ENCODE measurements at regions of chr12 and their contacts with region 1.

Region 1: GRCh38 chr12:99386907-99387306 is 260.6 kb upstream of the GARIN6 start:
- DNase-seq: no peak
- ATAC-seq: peak; percentile 45
- H3K4me3 ChIP-seq: no peak overlapping the region
- H3K27ac ChIP-seq: no peak overlapping the region
- H3K4me1 ChIP-seq: no peaks in the 10 kb centered on the region
- H3K27me3 ChIP-seq: no peaks in the 10 kb centered on the region
- CTCF ChIP-seq: peak; percentile 42 to 56 (median 51); a peak in 5 of 6 replicates
- EP300 ChIP-seq: no peak
- POLR2A ChIP-seq: no peak
- RAD21 ChIP-seq: peak; percentile 75

Region 2: GRCh38 chr12:99212275-99212674 is 174.6 kb before region 1 on chr12:
- CTCF ChIA-PET with region 1: no interaction called
- POLR2A ChIA-PET with region 1: no interaction called
- RAD21 ChIA-PET with region 1: no interaction called
- SMC1A ChIA-PET with region 1: no interaction called
- in situ Hi-C with region 1: no loop called
- intact Hi-C with region 1: no loop called
- DNase-seq: no peak
- ATAC-seq: no peak
- H3K4me3 ChIP-seq: no peak overlapping the region
- H3K27ac ChIP-seq: no peak overlapping the region
- H3K4me1 ChIP-seq: no peaks in the 10 kb centered on the region
- H3K27me3 ChIP-seq: no peaks in the 10 kb centered on the region
- CTCF ChIP-seq: no peak
- EP300 ChIP-seq: no peak
- POLR2A ChIP-seq: no peak
- RAD21 ChIP-seq: no peak

Region 3: DNA sequence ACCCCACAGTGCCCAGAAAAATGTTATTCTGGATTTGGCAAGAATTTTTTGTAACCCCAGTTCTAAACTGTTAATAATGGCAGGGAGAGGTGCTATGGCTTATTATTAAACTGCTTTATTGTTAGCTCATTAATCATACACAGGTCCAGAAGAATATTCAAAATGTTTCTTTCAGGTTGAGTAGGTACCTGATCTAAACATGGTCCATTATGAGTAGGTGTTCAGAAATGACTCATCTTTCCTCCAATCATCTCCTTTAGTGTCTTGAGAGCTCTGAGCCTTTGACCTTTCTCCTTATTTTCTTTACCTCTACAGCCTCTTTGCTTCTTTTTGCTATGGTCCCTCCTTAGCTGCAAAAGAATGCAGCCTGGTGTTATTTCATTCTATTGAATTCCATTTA is 49.7 kb after region 1 on chr12:
- CTCF ChIA-PET with region 1: interaction called, 4 read pairs
- POLR2A ChIA-PET with region 1: no interaction called
- RAD21 ChIA-PET with region 1: interaction called, 5 read pairs
- SMC1A ChIA-PET with region 1: interaction called, 5 read pairs
- in situ Hi-C with region 1: no loop called
- intact Hi-C with region 1: loop called (anchors 5 kb)
- DNase-seq: peak; percentile 73
- ATAC-seq: peak; percentile 94
- H3K4me3 ChIP-seq: no peak overlapping the region
- H3K27ac ChIP-seq: no peak overlapping the region; the same call in 1 of the 2 replicates
- H3K4me1 ChIP-seq: no peaks in the 10 kb centered on the region
- H3K27me3 ChIP-seq: no peaks in the 10 kb centered on the region
- CTCF ChIP-seq: no peak
- EP300 ChIP-seq: peak; percentile 92 to 99
- POLR2A ChIP-seq: no peak
- RAD21 ChIP-seq: no peak

Region 4: GRCh38 chr12:99453836-99454538 is 67.1 kb after region 1 on chr12:
- CTCF ChIA-PET with region 1: no interaction called
- POLR2A ChIA-PET with region 1: no interaction called
- RAD21 ChIA-PET with region 1: no interaction called
- SMC1A ChIA-PET with region 1: interaction called, 4 read pairs
- in situ Hi-C with region 1: no loop called
- intact Hi-C with region 1: loop called (anchors 5 kb)
- DNase-seq: no peak
- ATAC-seq: peak; percentile 70
- H3K4me3 ChIP-seq: no peak overlapping the region
- H3K27ac ChIP-seq: no peak overlapping the region; the same call in 1 of the 2 replicates
- H3K4me1 ChIP-seq: peaks cover 3% of the 10 kb centered on the region
- H3K27me3 ChIP-seq: no peaks in the 10 kb centered on the region
- CTCF ChIP-seq: no peak
- EP300 ChIP-seq: no peak
- POLR2A ChIP-seq: no peak
- RAD21 ChIP-seq: no peak

Region 5: DNA sequence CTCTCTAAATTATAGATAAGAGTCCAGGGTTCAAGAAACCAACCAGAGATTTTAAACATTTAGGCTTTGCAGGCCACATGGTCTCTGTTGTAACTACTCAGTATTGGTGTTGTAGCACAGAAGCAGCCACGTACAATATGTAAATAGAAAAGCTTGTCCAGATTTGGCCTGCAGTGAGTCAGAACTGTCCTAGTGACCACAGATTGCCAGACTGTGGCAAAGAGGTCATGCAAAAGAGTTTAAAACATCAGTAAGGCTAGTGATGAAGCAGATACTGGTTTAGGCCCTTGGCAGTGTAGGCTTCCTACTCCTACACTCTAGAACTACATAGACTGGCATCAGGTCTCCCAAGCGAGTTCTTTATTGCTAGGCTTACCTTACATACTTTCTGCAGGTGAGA is 143.1 kb after region 1 on chr12:
- CTCF ChIA-PET with region 1: no interaction called
- POLR2A ChIA-PET with region 1: no interaction called
- RAD21 ChIA-PET with region 1: no interaction called
- SMC1A ChIA-PET with region 1: interaction called, 5 read pairs
- in situ Hi-C with region 1: no loop called
- intact Hi-C with region 1: loop called (anchors 5 kb)
- DNase-seq: peak; percentile 62
- ATAC-seq: peak; percentile 96
- H3K4me3 ChIP-seq: no peak overlapping the region
- H3K27ac ChIP-seq: no peak overlapping the region
- H3K4me1 ChIP-seq: no peaks in the 10 kb centered on the region
- H3K27me3 ChIP-seq: no peaks in the 10 kb centered on the region
- CTCF ChIP-seq: no peak
- EP300 ChIP-seq: peak; percentile 27 to 28; a peak in 1 of 4 replicates
- POLR2A ChIP-seq: no peak
- RAD21 ChIP-seq: no peak

Region 6: DNA sequence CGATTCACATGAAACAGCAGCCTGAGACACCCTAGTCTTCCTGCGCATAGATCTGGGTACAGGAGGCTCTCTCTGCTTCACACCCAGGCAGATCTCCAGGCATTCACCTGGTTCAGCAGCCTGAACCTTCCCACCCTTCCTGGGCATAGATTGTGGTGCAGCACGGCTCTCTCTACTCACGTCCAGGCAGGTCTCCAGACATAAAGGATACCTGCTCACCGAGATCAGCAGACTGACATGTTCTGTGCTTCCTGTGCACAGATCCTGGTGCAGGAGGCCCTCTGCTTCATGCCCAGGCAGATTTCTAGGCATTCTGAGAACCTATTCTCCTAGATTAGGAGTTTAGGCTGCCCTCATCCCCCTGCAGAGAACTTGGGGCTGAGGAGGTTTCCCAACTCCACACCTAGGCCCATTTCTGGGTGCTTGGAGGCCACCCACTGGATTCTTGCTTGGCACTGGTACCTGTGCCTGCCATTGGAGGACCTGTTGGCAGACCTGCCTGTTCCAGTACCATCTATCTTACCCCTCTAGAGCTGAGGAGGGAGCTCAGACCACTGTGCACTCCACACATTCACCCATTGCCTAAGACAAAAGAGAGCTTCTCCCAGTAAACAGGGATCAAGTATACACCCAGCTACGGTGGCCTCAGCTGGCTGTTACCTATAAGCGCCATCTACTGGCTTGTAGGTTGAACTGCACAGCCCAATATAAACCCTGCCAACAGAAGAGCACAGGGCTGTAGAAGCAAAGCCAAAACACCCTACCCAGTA is 232.7 kb after region 1 on chr12:
- CTCF ChIA-PET with region 1: interaction called, 102 read pairs
- POLR2A ChIA-PET with region 1: no interaction called
- RAD21 ChIA-PET with region 1: interaction called, 16 read pairs
- SMC1A ChIA-PET with region 1: interaction called, 38 read pairs
- in situ Hi-C with region 1: loop called (anchors 25 kb)
- intact Hi-C with region 1: loop called (anchors 1 kb)
- DNase-seq: no peak
- ATAC-seq: peak; percentile 97
- H3K4me3 ChIP-seq: no peak overlapping the region
- H3K27ac ChIP-seq: no peak overlapping the region
- H3K4me1 ChIP-seq: no peaks in the 10 kb centered on the region
- H3K27me3 ChIP-seq: no peaks in the 10 kb centered on the region
- CTCF ChIP-seq: peak; percentile 67 to 85 (median 82)
- EP300 ChIP-seq: no peak
- POLR2A ChIP-seq: no peak
- RAD21 ChIP-seq: peak; percentile 82

Region 7: DNA sequence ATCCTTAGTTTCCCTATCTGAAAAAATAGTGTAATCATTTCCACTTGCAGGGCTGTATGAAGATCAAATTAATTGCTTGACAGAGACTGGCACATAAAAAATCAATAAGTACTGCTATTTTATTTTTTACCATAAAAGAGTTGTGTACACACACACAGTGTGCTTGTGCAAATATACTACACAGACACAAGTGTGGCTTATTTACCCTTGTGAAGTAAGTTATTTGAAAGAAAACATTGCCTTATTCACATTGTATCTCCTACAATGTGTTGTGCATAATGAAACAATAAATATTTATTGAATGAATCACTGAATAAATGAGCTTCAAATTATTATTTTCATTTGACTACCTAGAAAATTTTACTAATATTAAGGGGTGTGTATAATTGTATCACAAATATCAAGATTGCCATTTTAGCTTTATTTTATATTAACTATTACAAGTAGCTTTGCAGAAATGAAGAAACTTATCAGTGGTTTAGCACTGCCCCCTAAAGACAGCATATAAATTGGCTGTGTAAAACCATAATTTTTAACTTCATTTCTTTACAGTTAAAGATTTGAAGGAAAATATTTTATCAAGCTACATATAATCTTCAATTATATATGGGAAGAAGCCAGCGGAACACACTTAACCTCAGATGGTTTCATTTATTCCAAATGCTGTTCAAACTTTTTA is 271.9 kb after region 1 on chr12:
- CTCF ChIA-PET with region 1: interaction called, 19 read pairs
- POLR2A ChIA-PET with region 1: interaction called, 6 read pairs
- RAD21 ChIA-PET with region 1: interaction called, 5 read pairs
- SMC1A ChIA-PET with region 1: interaction called, 11 read pairs
- in situ Hi-C with region 1: no loop called
- intact Hi-C with region 1: loop called (anchors 1 kb)
- DNase-seq: no peak
- ATAC-seq: no peak
- H3K4me3 ChIP-seq: no peak overlapping the region
- H3K27ac ChIP-seq: no peak overlapping the region
- H3K4me1 ChIP-seq: no peaks in the 10 kb centered on the region
- H3K27me3 ChIP-seq: no peaks in the 10 kb centered on the region
- CTCF ChIP-seq: peak in 1 of 3 experiments; percentile 16; a peak in 2 of 6 replicates
- EP300 ChIP-seq: no peak
- POLR2A ChIP-seq: no peak
- RAD21 ChIP-seq: peak; percentile 59

Region 8: GRCh38 chr12:99767809-99768208 is 380.9 kb after region 1 on chr12:
- CTCF ChIA-PET with region 1: interaction called, 22 read pairs
- POLR2A ChIA-PET with region 1: no interaction called
- RAD21 ChIA-PET with region 1: no interaction called
- SMC1A ChIA-PET with region 1: interaction called, 5 read pairs
- in situ Hi-C with region 1: no loop called
- intact Hi-C with region 1: loop called (anchors 2 kb)
- DNase-seq: no peak
- ATAC-seq: no peak
- H3K4me3 ChIP-seq: no peak overlapping the region
- H3K27ac ChIP-seq: no peak overlapping the region
- H3K4me1 ChIP-seq: no peaks in the 10 kb centered on the region
- H3K27me3 ChIP-seq: no peaks in the 10 kb centered on the region
- CTCF ChIP-seq: peak in 1 of 3 experiments; percentile 41; a peak in 3 of 6 replicates
- EP300 ChIP-seq: no peak
- POLR2A ChIP-seq: no peak
- RAD21 ChIP-seq: peak; percentile 51; the same call in 1 of the 2 replicates